ENCODE measurements at regions of chr17 and their contacts with region 1.

Region 1: DNA sequence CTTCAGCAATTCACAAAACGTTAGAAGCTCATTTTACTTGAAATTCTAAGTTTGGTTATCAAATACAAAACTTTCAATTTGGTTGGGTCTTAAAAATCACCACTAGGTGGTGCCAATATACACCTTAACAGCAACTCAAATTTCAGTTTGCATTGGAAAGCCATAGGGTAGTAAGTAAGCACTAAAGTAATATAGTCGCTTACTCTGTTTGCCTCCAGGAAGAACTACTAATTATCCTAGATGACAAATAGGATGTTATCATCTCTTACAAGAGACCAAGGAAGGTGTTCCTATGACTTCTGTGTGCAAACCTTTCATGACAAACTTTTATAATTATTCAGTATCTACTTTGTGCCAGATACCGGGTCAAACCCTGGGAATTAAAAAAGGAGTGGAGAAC is 93.3 kb downstream of the MYO1D start:
- DNase-seq: peak; percentile 61 to 69
- ATAC-seq: peak; percentile 70 to 77; a peak in 5 of 6 replicates
- H3K4me3 ChIP-seq: no peak overlapping the region
- H3K27ac ChIP-seq: no peak overlapping the region
- H3K4me1 ChIP-seq: no peaks in the 10 kb centered on the region
- CTCF ChIP-seq: peak; percentile 95
- EP300 ChIP-seq: no peak
- POLR2A ChIP-seq: no peak
- RAD21 ChIP-seq: peak; percentile 89 to 92

Region 2: DNA sequence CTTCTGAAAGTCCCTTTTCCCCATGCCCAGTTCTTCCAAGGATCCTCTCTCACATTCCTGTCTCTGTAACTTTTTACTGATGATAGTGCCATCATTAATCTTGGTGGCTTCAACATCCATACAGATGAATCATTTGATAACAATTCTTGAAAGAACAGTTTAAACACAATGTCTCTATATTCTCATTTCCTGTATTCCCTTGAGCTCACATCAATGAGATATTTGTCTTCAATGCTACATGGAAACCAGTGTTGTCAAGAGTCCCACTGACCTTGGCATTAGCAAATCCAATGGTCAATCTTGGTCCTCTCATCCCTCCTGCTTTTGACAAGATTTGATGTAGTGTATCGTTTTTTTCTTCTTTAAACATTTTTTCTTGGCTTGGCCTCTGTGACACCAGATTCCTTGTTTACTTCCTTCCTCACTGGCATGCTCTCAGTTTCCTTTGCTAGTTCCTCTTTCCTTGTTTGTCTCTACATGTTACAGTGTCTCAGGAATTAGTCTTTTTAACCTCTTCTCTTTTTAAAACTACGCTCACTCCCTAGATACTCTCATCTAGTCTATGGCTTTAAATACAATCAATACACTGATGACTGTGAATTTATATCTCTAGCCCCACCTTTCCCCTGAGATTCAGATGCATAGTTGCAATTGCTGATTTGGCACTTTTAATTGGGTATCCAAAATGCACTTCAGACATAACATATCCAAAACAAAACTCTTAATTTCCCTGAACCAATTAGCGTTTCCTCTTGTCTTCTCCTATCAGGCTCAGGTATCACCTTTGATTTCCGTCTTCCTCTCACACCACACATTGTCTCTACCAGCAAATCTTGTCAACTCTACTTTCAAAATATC is 40.7 kb before region 1 on chr17:
- CTCF ChIA-PET with region 1: no interaction called
- POLR2A ChIA-PET with region 1: no interaction called
- DNase-seq: no peak
- ATAC-seq: no peak
- H3K4me3 ChIP-seq: no peak overlapping the region
- H3K27ac ChIP-seq: no peak overlapping the region
- H3K4me1 ChIP-seq: peaks cover 8% of the 10 kb centered on the region; the same call in 1 of the 3 replicates
- CTCF ChIP-seq: no peak
- EP300 ChIP-seq: no peak
- POLR2A ChIP-seq: no peak
- RAD21 ChIP-seq: no peak

Region 3: DNA sequence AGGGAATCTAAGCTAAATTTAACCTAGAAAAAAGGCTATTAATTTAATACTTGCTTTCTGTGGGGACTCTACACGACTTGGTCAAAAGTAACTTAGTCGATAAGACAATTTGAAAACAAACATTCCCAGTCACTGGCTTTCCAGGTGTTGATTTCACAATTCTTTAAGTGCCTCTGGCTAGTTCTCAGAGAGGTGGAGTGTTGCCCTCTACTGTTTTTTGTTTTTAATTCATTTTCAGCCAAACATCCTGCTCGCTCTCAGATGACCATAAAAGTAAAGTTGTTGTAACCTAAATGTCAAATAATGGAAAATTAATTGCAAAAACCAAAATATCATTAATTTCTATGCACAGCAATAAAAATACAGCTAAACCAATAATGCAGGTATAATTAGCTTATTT is 13.8 kb before region 1 on chr17:
- CTCF ChIA-PET with region 1: interaction called, 22 read pairs
- POLR2A ChIA-PET with region 1: no interaction called
- DNase-seq: peak; percentile 20 to 38
- ATAC-seq: no peak; a peak in 2 of 6 replicates
- H3K4me3 ChIP-seq: no peak overlapping the region
- H3K27ac ChIP-seq: no peak overlapping the region
- H3K4me1 ChIP-seq: peaks cover 19% of the 10 kb centered on the region
- CTCF ChIP-seq: peak; percentile 51
- EP300 ChIP-seq: no peak
- POLR2A ChIP-seq: no peak
- RAD21 ChIP-seq: peak; percentile 43 to 54; a peak in 4 of 5 replicates

Region 4: GRCh38 chr17:32805029-32805976 is 21.7 kb after region 1 on chr17:
- CTCF ChIA-PET with region 1: interaction called, 15 read pairs
- POLR2A ChIA-PET with region 1: no interaction called
- DNase-seq: no peak
- ATAC-seq: no peak
- H3K4me3 ChIP-seq: no peak overlapping the region
- H3K27ac ChIP-seq: no peak overlapping the region
- H3K4me1 ChIP-seq: peaks cover 9% of the 10 kb centered on the region; the same call in 2 of the 3 replicates
- CTCF ChIP-seq: no peak
- EP300 ChIP-seq: no peak
- POLR2A ChIP-seq: no peak
- RAD21 ChIP-seq: no peak

Region 5: GRCh38 chr17:32877164-32877764 is 93.7 kb after region 1 on chr17:
- CTCF ChIA-PET with region 1: interaction called, 205 read pairs
- POLR2A ChIA-PET with region 1: interaction called, 11 read pairs
- DNase-seq: peak; percentile 75 to 84
- ATAC-seq: peak; percentile 96 to 97
- H3K4me3 ChIP-seq: peak overlapping the region; percentile 77
- H3K27ac ChIP-seq: peak overlapping the region; percentile 66 to 88; a peak in 5 of 6 replicates
- H3K4me1 ChIP-seq: peaks cover 9% of the 10 kb centered on the region; the same call in 1 of the 3 replicates
- CTCF ChIP-seq: peak; percentile 99
- EP300 ChIP-seq: no peak
- POLR2A ChIP-seq: no peak
- RAD21 ChIP-seq: peak; percentile 50 to 79

Region 6: DNA sequence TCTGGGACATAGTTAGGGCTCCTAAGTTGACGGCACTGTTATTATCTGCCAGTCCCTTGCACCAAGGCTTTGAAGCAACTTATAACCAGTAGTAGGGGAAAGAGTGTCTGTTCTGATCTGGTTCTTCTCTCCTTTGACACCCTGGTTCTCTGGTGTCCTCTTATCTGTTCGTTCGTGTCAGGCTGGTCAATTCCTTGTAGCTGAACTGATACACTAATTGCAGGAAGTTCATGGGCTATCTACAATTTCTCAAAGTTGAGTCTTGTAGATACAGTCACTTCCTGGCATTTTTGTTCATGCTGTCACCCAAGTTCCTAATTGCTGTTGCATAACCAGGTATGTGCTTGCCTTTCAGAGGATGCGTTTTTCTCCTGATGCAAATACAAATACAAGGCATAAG is 110.6 kb after region 1 on chr17:
- CTCF ChIA-PET with region 1: interaction called, 13 read pairs
- POLR2A ChIA-PET with region 1: no interaction called
- DNase-seq: no peak
- ATAC-seq: no peak
- H3K4me3 ChIP-seq: no peak overlapping the region
- H3K27ac ChIP-seq: no peak overlapping the region
- H3K4me1 ChIP-seq: no peaks in the 10 kb centered on the region
- CTCF ChIP-seq: no peak
- EP300 ChIP-seq: no peak
- POLR2A ChIP-seq: no peak
- RAD21 ChIP-seq: no peak

Region 7: GRCh38 chr17:32936894-32937500 is 153.4 kb after region 1 on chr17:
- CTCF ChIA-PET with region 1: interaction called, 34 read pairs
- POLR2A ChIA-PET with region 1: no interaction called
- DNase-seq: peak; percentile 69 to 78
- ATAC-seq: peak; percentile 79 to 95
- H3K4me3 ChIP-seq: no peak overlapping the region
- H3K27ac ChIP-seq: no peak overlapping the region
- H3K4me1 ChIP-seq: no peaks in the 10 kb centered on the region
- CTCF ChIP-seq: peak; percentile 85
- EP300 ChIP-seq: no peak
- POLR2A ChIP-seq: no peak
- RAD21 ChIP-seq: peak; percentile 52 to 54

Region 8: GRCh38 chr17:33674685-33675084 is 891.1 kb after region 1 on chr17:
- CTCF ChIA-PET with region 1: interaction called, 20 read pairs
- POLR2A ChIA-PET with region 1: interaction called, 5 read pairs
- DNase-seq: peak; percentile 61 to 64
- ATAC-seq: peak; percentile 96 to 99
- H3K4me3 ChIP-seq: no peak overlapping the region
- H3K27ac ChIP-seq: no peak overlapping the region
- H3K4me1 ChIP-seq: no peaks in the 10 kb centered on the region
- CTCF ChIP-seq: peak; percentile 70
- EP300 ChIP-seq: no peak
- POLR2A ChIP-seq: no peak
- RAD21 ChIP-seq: peak; percentile 63 to 69

Measured in A549 (cell line).